Ascending aorta (tissue), 2 donors: ENCODE measurements at regions of chrX and their contacts with region 1.

Region 1: GRCh38 chrX:72181178-72182125 is at the start of gene PIN4:
- DNase-seq: peak; percentile 65 to 94
- H3K4me3 ChIP-seq: peak within 1 kb of the TSS; percentile 69 to 71
- H3K27ac ChIP-seq: peak within 1 kb of the TSS; percentile 68 to 72
- H3K4me1 ChIP-seq: peaks cover 0 to 4% of the 10 kb centered on the region in 2 donors
- H3K27me3 ChIP-seq: no peaks in the 10 kb centered on the region
- CTCF ChIP-seq: no peak
- total RNA-seq, gene PIN4: 3.6 TPM

Region 2: DNA sequence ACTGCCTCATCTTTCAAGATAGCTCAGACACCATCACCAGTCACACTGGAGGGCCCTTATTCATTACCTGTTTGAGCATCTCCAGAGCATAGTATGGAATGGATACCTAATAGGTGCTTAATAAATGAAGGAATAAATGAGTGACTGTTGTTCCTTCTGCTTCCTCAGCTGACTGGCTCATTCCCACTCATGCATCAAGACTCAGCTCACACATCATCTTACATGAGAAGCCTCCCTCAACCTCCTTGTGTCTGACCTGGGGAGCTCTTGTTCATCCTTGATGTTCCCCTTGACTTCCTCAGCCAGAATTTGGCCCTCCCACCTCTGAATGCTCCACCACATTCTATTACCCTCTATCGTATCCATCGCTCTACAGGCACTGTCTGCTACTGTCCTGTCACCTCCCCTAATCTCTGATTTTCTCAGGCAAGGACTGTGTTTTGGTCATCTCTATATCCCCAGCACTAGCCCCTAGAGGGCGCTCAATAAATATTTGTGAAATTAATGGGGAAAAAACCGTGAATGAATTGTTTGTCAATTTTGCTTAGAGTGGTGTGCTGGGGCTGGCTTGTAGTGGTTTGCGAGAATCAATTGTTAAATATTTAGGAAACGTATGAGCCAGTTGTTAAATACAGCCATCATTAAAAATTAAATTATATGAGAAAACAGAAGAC is 182.5 kb before region 1 on chrX:
- intact Hi-C with region 1: loop called (anchors 5 kb)
- DNase-seq: no peak
- H3K4me3 ChIP-seq: no peak overlapping the region
- H3K27ac ChIP-seq: no peak overlapping the region
- H3K4me1 ChIP-seq: no peaks in the 10 kb centered on the region
- H3K27me3 ChIP-seq: no peaks in the 10 kb centered on the region
- CTCF ChIP-seq: peak; percentile 44 to 66 (median 47)

Region 3: DNA sequence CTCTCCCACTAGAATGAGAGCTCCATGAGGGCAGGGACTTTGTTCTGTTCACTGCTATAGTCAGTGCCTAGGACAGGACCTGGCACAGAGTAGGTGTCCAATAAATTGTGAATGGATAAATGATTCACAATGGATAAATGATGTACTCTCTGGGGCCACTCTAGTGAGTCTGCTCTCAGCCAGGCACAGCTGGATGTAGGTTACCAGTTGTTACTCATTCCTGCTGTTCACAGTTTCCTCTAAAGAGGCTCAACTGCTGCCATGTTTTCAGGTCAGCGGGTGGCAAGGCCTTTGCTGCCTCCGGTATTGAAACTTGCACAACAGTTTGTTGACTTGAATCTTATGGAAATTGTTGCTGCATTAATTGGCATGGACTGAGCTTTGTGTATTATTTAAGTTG is 171.7 kb before region 1 on chrX:
- intact Hi-C with region 1: no loop called
- DNase-seq: no peak
- H3K4me3 ChIP-seq: no peak overlapping the region
- H3K27ac ChIP-seq: no peak overlapping the region
- H3K4me1 ChIP-seq: no peaks in the 10 kb centered on the region
- H3K27me3 ChIP-seq: no peaks in the 10 kb centered on the region
- CTCF ChIP-seq: no peak

Region 4: DNA sequence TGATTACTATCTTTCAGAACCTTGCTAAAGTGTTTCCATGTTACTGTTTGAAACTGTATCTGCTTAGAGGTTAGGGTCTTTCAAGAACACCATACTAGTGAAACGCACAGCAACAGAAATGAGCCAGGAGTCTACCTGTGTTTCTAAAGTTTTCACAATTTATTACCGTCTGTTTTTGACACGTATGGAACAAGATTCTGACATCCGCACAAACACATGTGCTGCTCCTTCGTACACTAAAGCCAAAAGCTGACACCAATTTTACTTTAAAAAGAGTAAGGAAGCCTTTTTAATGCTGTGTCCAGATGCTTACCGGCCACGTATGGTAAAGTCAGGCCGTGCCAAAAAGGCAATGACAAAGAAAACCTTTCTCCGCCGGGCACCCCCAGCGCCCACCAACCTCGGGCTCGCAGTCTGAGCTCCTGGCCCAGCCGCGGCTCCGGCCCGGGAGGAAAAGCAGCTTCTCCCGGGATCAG is 95.1 kb after region 1 on chrX:
- intact Hi-C with region 1: loop called (anchors 2 kb)
- DNase-seq: no peak
- H3K4me3 ChIP-seq: peak overlapping the region; percentile 63 to 75
- H3K27ac ChIP-seq: peak overlapping the region; percentile 87 to 88
- H3K4me1 ChIP-seq: peaks cover 0 to 3% of the 10 kb centered on the region in 2 donors
- H3K27me3 ChIP-seq: no peaks in the 10 kb centered on the region
- CTCF ChIP-seq: no peak